ENCODE measurements at regions of chr1 and their contacts with region 1.

Region 1: GRCh38 chr1:151198255-151199127 is at the start of gene PIP5K1A:
- DNase-seq: peak; percentile 99 to 100 (median 100)
- H3K4me3 ChIP-seq: peak within 1 kb of the TSS; percentile 27 to 97 (median 62)
- H3K27ac ChIP-seq: peak within 1 kb of the TSS; percentile 61 to 99 (median 94)
- H3K4me1 ChIP-seq: peaks cover 32 to 38% of the 10 kb centered on the region in 2 donors
- H3K27me3 ChIP-seq: no peaks in the 10 kb centered on the region
- CTCF ChIP-seq: no peak
- POLR2A ChIP-seq: peak; percentile 72 to 95
- total RNA-seq, gene PIP5K1A: 28.8 to 61.7 (median 47.1) TPM

Region 2: DNA sequence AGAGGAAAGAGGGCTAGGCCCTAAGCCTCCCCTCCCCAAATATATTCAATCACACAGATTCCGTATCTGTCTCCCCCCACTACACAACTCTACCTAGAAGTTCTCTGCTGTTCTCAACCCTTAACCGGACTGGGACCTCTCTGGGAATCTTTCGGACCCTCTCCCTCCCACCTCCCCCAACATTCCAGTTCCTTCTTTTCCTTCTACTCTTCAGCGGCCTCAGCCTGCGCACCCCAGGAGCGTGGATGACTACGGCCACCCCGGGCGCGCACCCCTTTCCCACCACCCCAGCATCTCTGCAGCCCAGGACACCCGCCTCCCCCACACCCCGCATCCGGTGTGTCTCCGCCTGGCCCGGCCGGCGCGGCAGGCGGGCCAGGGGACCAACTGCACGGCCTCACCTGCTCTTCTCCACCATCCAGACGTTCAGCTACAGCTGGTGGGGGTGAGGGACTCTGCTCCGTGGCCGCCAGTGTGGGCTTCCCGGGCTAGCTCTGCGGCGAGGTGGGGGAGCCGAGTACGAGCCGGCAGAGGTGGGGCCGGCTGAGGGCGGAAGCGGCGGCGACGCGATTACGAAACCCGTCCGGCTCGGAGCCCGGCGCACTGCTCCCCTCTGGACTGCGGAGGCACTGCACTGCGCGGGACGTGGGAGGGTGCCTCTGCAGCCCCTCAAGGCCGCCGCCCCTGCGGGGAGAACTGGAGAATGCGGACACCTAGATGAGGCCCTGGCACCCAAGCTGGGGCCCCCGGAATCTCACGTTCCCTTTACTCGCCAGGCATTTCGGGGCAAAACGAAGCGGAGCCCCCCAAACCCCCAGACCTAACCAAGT is 139.2 kb before region 1 on chr1 and contains the start of gene CDC42SE1:
- intact Hi-C with region 1: no loop called
- DNase-seq: peak; percentile 79 to 87 (median 84)
- H3K4me3 ChIP-seq: peak within 1 kb of the TSS; percentile 92 to 99 (median 96)
- H3K27ac ChIP-seq: peak within 1 kb of the TSS; percentile 86 to 98 (median 94)
- H3K4me1 ChIP-seq: peaks cover 30% of the 10 kb centered on the region in 2 donors
- H3K27me3 ChIP-seq: no peaks in the 10 kb centered on the region
- CTCF ChIP-seq: peak; percentile 40 to 95 (median 84)
- POLR2A ChIP-seq: peak; percentile 80 to 88
- total RNA-seq, gene CDC42SE1: 53.6 to 125 (median 88.2) TPM

Region 3: GRCh38 chr1:151254217-151255213 is 56.0 kb after region 1 on chr1 and contains the start of gene PSMD4:
- intact Hi-C with region 1: loop called (anchors 5 kb)
- DNase-seq: peak; percentile 93 to 98 (median 96)
- H3K4me3 ChIP-seq: peak within 1 kb of the TSS; percentile 19 to 96 (median 73)
- H3K27ac ChIP-seq: peak within 1 kb of the TSS; percentile 55 to 97 (median 84)
- H3K4me1 ChIP-seq: peaks cover 12 to 18% of the 10 kb centered on the region in 2 donors
- H3K27me3 ChIP-seq: no peaks in the 10 kb centered on the region
- CTCF ChIP-seq: peak in 3 of 6 experiments; percentile 5 to 21 (median 19)
- POLR2A ChIP-seq: peak; percentile 65 to 69
- total RNA-seq, gene PSMD4: 99.5 to 380 (median 144) TPM

Region 4: GRCh38 chr1:151324390-151324930 is 126.0 kb after region 1 on chr1:
- intact Hi-C with region 1: no loop called
- DNase-seq: no peak
- H3K4me3 ChIP-seq: no peak overlapping the region
- H3K27ac ChIP-seq: no peak overlapping the region
- H3K4me1 ChIP-seq: peaks cover 26 to 35% of the 10 kb centered on the region in 2 donors
- H3K27me3 ChIP-seq: no peaks in the 10 kb centered on the region
- CTCF ChIP-seq: no peak
- POLR2A ChIP-seq: no peak

Measured in adrenal gland (tissue), 19 donors.